PC-9 (cell line): ENCODE measurements at regions of chr5 and their contacts with region 1.

Region 1: GRCh38 chr5:122019919-122020590 is 58.0 kb downstream of the LOX start:
- DNase-seq: no peak
- H3K4me3 ChIP-seq: no peak overlapping the region
- H3K27ac ChIP-seq: no peak overlapping the region
- H3K4me1 ChIP-seq: no peaks in the 10 kb centered on the region
- H3K27me3 ChIP-seq: no peaks in the 10 kb centered on the region
- CTCF ChIP-seq: no peak

Region 2: DNA sequence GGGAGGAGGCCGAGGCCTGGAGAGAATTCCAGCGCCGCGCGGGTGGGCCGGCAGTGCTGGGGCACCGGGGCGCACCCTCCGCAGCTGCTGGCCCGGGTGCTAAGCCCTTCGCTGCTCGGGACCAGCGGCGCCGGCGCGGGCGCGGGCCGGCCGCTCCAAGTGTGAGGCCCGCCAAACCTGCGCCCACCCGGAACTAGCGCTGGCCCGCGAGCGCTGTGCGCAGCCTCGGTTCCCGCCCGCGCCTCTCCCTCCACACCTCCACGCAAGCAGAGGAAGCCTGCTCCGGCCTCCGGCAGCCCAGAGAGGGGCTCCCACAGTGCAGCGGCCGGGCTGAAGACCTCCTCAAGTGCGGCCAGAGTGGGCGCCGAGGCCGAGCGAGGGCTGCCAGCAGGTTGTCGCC is 66.0 kb before region 1 on chr5:
- CTCF ChIA-PET with region 1: no interaction called
- POLR2A ChIA-PET with region 1: no interaction called
- intact Hi-C with region 1: no loop called
- DNase-seq: no peak
- H3K4me3 ChIP-seq: no peak overlapping the region
- H3K27ac ChIP-seq: no peak overlapping the region
- H3K4me1 ChIP-seq: no peaks in the 10 kb centered on the region
- H3K27me3 ChIP-seq: no peaks in the 10 kb centered on the region
- CTCF ChIP-seq: no peak

Region 3: GRCh38 chr5:121982146-121982892 is 37.7 kb before region 1 on chr5:
- CTCF ChIA-PET with region 1: no interaction called
- POLR2A ChIA-PET with region 1: interaction called, 10 read pairs
- intact Hi-C with region 1: no loop called
- DNase-seq: no peak
- H3K4me3 ChIP-seq: no peak overlapping the region
- H3K27ac ChIP-seq: no peak overlapping the region
- H3K4me1 ChIP-seq: no peaks in the 10 kb centered on the region
- H3K27me3 ChIP-seq: no peaks in the 10 kb centered on the region
- CTCF ChIP-seq: no peak